ENCODE measurements at regions of chr18 and their contacts with region 1.

Region 1: GRCh38 chr18:32158108-32158624 is 31.7 kb upstream of the MEP1B start:
- DNase-seq: peak; percentile 34 to 81 (median 75)
- ATAC-seq: peak; percentile 96
- H3K4me3 ChIP-seq: peak overlapping the region; percentile 36
- H3K4me3 Mint-ChIP-seq: peak overlapping the region; percentile 39 to 89 (median 78)
- H3K27ac ChIP-seq: no peak overlapping the region
- H3K27ac Mint-ChIP-seq: peak overlapping the region in 2 of 9 donors; percentile 1 to 14
- H3K4me1 ChIP-seq: no peaks in the 10 kb centered on the region
- H3K4me1 Mint-ChIP-seq: peaks cover 0 to 9% (median 6%) of the 10 kb centered on the region in 7 donors
- H3K27me3 ChIP-seq: no peaks in the 10 kb centered on the region
- H3K27me3 Mint-ChIP-seq: peaks cover 0 to 15% (median 0%) of the 10 kb centered on the region in 5 donors

Region 2: GRCh38 chr18:32271672-32272208 is 113.6 kb after region 1 on chr18:
- CTCF ChIA-PET with region 1: no interaction called
- POLR2A ChIA-PET with region 1: no interaction called
- intact Hi-C with region 1: loop called in 1 of 2 experiments (anchors 1 kb)
- DNase-seq: peak in 5 of 9 donors; percentile 10 to 25 (median 20)
- ATAC-seq: peak; percentile 34
- H3K4me3 ChIP-seq: no peak overlapping the region
- H3K4me3 Mint-ChIP-seq: no peak overlapping the region
- H3K27ac ChIP-seq: no peak overlapping the region
- H3K27ac Mint-ChIP-seq: no peak overlapping the region
- H3K4me1 ChIP-seq: no peaks in the 10 kb centered on the region
- H3K4me1 Mint-ChIP-seq: no peaks in the 10 kb centered on the region
- H3K27me3 ChIP-seq: no peaks in the 10 kb centered on the region
- H3K27me3 Mint-ChIP-seq: peaks cover 0 to 18% (median 16%) of the 10 kb centered on the region in 5 donors

Region 3: GRCh38 chr18:32289483-32290075 is 131.4 kb after region 1 on chr18:
- CTCF ChIA-PET with region 1: no interaction called
- POLR2A ChIA-PET with region 1: no interaction called
- intact Hi-C with region 1: loop called (anchors 1 to 2 kb)
- DNase-seq: peak in 6 of 9 donors; percentile 8 to 34 (median 26)
- ATAC-seq: peak; percentile 67
- H3K4me3 ChIP-seq: no peak overlapping the region
- H3K4me3 Mint-ChIP-seq: no peak overlapping the region
- H3K27ac ChIP-seq: no peak overlapping the region
- H3K27ac Mint-ChIP-seq: no peak overlapping the region
- H3K4me1 ChIP-seq: no peaks in the 10 kb centered on the region
- H3K4me1 Mint-ChIP-seq: no peaks in the 10 kb centered on the region
- H3K27me3 ChIP-seq: no peaks in the 10 kb centered on the region
- H3K27me3 Mint-ChIP-seq: peaks cover 6 to 37% (median 16%) of the 10 kb centered on the region in 5 donors

Region 4: DNA sequence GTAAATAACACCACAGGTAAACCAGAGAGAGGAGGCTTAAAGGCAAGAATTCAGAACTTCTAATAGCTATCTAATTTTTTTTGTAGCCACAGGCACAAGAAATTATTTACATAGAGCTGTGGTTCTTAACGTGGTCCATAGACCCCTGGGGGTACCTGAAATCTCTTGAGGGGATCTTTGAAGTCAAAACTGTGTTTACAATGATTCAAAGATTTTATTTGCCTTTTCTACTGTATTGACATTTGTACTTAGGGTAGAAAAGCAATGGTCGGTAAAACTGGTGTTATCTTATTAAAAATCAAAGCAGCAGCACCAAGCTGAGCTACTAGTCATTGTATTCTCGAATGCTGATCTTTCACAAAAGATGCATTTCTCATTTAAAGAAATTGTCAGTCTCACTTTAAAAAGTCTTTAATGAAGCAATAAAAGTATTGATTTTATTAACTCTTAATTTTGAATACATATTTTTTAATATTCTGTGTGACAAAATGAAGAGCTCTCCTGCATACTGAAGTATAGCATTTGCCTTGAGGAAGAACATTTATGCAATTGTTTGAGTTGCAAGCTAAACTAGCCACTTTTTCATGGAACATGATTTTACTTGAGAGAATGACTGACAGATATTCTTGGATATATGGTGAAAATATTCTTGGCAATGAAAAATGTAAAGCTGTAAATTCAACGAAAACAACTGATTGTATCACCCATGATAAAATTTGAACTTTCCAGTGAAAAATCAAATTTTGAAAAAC is 640.2 kb after region 1 on chr18:
- CTCF ChIA-PET with region 1: no interaction called
- POLR2A ChIA-PET with region 1: no interaction called
- intact Hi-C with region 1: no loop called
- DNase-seq: no peak
- ATAC-seq: no peak
- H3K4me3 ChIP-seq: no peak overlapping the region
- H3K4me3 Mint-ChIP-seq: no peak overlapping the region
- H3K27ac ChIP-seq: no peak overlapping the region
- H3K27ac Mint-ChIP-seq: no peak overlapping the region
- H3K4me1 ChIP-seq: no peaks in the 10 kb centered on the region
- H3K4me1 Mint-ChIP-seq: no peaks in the 10 kb centered on the region
- H3K27me3 ChIP-seq: no peaks in the 10 kb centered on the region
- H3K27me3 Mint-ChIP-seq: peaks cover 0 to 5% (median 0%) of the 10 kb centered on the region in 5 donors

Measured in naive thymus-derived CD4-positive, alpha-beta T cell (primary cell).